Left ventricle myocardium superior (tissue), 1 donor: ENCODE measurements at regions of chr2 and their contacts with region 1.

Region 1: GRCh38 chr2:20635675-20636584 is 15.0 kb downstream of the HS1BP3 start:
- DNase-seq: peak; percentile 92
- ATAC-seq: peak; percentile 86

Region 2: DNA sequence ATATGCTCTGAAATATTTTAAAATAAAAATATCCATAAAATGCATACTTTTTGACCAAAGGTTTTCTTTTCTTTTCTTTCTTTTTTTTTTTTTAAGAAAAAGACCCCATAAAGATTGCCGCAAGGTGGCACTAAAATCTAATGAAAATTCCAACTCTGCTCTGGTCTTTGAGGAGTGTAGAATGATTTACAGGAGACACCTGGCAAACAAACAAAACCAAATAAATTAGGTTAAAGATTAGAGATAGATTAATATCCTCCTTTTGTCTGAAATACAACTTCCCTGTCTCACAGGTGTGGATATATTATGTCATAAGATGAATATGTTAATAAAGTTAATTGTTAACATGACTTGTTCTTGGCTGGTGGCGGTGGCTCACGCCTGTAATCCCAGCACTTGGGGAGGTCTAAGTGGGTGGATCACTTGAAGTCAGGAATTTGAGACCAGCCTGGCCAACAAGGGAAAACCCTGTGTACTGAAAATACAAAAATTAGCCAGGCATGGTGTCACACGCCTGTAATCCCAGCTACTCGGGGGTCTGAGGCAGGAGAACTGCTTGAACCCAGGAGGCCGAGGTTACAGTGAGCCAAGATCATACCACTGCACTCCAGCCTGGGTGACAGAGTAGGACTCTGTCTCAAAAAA is 192.5 kb before region 1 on chr2:
- intact Hi-C with region 1: loop called (anchors 2 kb)
- DNase-seq: no peak
- ATAC-seq: no peak

Region 3: GRCh38 chr2:20466417-20466911 is 169.5 kb before region 1 on chr2:
- intact Hi-C with region 1: no loop called
- DNase-seq: no peak
- ATAC-seq: no peak

Region 4: DNA sequence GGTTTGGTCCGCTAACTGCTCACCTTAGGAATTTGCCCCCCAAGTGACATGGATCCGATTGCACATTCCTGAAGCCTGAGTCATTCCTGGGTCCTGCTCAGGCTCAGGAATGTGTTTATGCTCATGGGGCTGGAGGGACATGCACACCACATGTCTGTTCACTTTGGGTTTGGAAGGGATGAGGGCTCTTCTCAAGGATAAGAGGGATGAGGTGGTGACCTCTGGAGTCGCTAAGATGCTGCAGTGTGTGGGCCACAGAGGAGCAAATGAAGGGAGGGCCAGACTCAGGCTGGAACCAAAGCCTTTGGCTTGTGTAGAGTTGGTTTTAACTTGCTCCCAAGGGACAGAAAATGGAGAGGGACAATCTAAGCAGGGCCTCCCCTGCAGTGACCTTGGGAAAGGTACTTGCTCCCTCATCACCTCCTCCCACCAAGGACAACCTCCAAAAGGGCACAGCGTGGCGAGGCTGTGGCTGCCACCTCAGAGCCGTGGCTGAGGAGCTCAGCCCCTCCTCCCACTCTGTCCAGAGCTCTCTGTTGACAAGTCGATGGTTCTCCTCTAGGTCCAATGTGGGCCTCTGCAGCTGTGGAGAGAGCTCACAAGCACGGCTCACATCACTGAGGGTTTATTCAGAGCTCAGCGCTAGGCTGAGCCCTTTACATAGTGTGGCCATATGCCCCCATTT is 51.2 kb before region 1 on chr2:
- intact Hi-C with region 1: no loop called
- DNase-seq: no peak
- ATAC-seq: peak; percentile 70